ENCODE measurements at regions of chr4 and their contacts with region 1.

Region 1: GRCh38 chr4:113452868-113453620 is 308.5 kb downstream of the CAMK2D start:
- DNase-seq: peak in 1 of 5 donors; percentile 43
- ATAC-seq: peak in 1 of 4 donors; percentile 39
- H3K4me3 ChIP-seq: no peak overlapping the region
- H3K27ac ChIP-seq: peak overlapping the region in 11 of 12 donors; percentile 4 to 84 (median 45)
- H3K4me1 ChIP-seq: peaks cover 0 to 47% (median 23%) of the 10 kb centered on the region in 12 donors
- H3K27me3 ChIP-seq: no peaks in the 10 kb centered on the region
- CTCF ChIP-seq: no peak
- POLR2A ChIP-seq: no peak

Region 2: DNA sequence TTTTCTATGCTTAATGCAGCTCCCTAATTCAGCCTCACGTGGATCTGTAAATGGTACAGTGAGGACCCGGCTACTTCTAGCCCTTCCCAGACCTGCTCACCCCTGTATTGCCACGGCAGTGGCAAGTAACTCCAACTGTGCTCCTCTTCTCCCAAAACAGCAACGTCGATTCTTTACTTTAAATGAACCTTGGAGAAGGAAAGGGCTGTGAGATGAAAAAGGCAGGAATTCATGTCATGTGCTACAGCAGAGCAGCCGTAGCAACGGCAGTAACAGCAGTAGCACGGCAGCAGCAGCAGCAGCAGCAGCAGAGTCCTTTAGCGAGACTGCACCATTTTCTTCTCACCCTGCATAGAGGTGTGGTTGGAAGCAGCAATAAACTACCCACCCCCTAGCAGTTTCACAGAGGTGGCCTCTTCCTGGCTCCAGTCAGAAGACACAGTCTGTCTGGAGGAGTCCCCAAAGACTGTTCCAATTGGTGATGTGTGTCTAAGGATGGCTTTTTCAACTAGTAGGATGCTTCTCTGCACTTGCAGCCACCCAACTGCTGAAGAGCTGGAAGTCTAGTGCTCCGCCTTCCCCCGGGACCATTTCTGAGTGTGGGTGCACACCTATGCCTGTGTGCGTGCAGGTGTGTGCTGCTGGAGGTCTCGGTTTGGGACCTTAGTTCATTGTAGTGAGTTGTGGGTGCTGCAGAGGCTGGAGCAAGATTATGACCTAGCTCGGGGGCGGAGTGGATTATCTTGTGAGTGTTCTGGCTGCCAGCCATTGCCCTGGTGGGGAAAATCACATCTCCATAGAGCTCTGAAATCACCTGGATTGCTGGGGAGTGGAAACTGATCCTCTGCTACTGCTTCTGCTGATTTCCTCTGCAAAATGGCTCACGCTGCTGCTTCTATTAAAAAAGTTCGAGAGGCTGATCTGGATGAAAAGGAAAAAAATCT is 336.4 kb before region 1 on chr4:
- intact Hi-C with region 1: no loop called
- DNase-seq: peak in 1 of 5 donors; percentile 29
- ATAC-seq: peak; percentile 53 to 73 (median 68)
- H3K4me3 ChIP-seq: peak overlapping the region in 1 of 12 donors; percentile 6
- H3K27ac ChIP-seq: no peak overlapping the region
- H3K4me1 ChIP-seq: peaks cover 0 to 26% (median 0%) of the 10 kb centered on the region in 12 donors
- H3K27me3 ChIP-seq: no peaks in the 10 kb centered on the region
- CTCF ChIP-seq: no peak
- POLR2A ChIP-seq: no peak

Region 3: GRCh38 chr4:113328514-113328913 is 124.5 kb before region 1 on chr4:
- intact Hi-C with region 1: no loop called
- DNase-seq: no peak
- ATAC-seq: peak in 2 of 4 donors; percentile 55 to 62
- H3K4me3 ChIP-seq: no peak overlapping the region
- H3K27ac ChIP-seq: no peak overlapping the region
- H3K4me1 ChIP-seq: peaks cover 0 to 3% (median 0%) of the 10 kb centered on the region in 12 donors
- H3K27me3 ChIP-seq: no peaks in the 10 kb centered on the region
- CTCF ChIP-seq: peak in 9 of 12 donors; percentile 9 to 47 (median 34)
- POLR2A ChIP-seq: no peak

Region 4: DNA sequence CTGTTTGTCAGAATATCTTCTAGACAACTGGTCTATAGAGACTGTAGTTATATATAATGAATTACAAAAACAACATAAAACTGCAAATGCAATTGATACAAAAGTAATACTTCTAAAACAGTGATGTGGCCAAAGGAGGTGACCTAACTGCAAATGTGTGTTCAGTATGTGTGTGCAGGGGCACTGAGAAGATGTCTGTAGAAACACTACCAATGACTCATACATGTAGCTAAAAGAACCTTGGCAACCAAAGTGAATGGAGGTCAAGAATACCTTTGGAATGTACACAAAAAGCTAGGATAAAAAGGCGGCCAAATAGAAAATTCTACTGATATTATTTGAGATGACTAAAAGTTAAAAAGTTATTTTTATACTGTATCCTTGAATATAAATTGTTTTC is 46.7 kb after region 1 on chr4:
- intact Hi-C with region 1: loop called in 1 of 10 experiments (anchors 10 kb)
- DNase-seq: no peak
- ATAC-seq: peak in 1 of 4 donors; percentile 50
- H3K4me3 ChIP-seq: no peak overlapping the region
- H3K27ac ChIP-seq: peak overlapping the region in 2 of 12 donors; percentile 16 to 22
- H3K4me1 ChIP-seq: peaks cover 0 to 29% (median 10%) of the 10 kb centered on the region in 12 donors
- H3K27me3 ChIP-seq: no peaks in the 10 kb centered on the region
- CTCF ChIP-seq: no peak
- POLR2A ChIP-seq: no peak

Region 5: GRCh38 chr4:113524505-113525186 is 71.6 kb after region 1 on chr4:
- intact Hi-C with region 1: loop called in 1 of 10 experiments (anchors 5 kb)
- DNase-seq: no peak
- ATAC-seq: no peak
- H3K4me3 ChIP-seq: no peak overlapping the region
- H3K27ac ChIP-seq: no peak overlapping the region
- H3K4me1 ChIP-seq: peaks cover 0 to 10% (median 0%) of the 10 kb centered on the region in 12 donors
- H3K27me3 ChIP-seq: no peaks in the 10 kb centered on the region
- CTCF ChIP-seq: no peak
- POLR2A ChIP-seq: no peak